ENCODE measurements at regions of chr5 and their contacts with region 1.

Region 1: GRCh38 chr5:671459-672328 is 21.5 kb downstream of the TPPP start:
- DNase-seq: peak; percentile 52 to 94
- H3K4me3 ChIP-seq: peak overlapping the region; percentile 34; the same call in 1 of the 2 replicates
- H3K27ac ChIP-seq: no peak overlapping the region
- H3K4me1 ChIP-seq: peaks cover 27% of the 10 kb centered on the region
- H3K27me3 ChIP-seq: no peaks in the 10 kb centered on the region
- CTCF ChIP-seq: peak; percentile 100

Region 2: DNA sequence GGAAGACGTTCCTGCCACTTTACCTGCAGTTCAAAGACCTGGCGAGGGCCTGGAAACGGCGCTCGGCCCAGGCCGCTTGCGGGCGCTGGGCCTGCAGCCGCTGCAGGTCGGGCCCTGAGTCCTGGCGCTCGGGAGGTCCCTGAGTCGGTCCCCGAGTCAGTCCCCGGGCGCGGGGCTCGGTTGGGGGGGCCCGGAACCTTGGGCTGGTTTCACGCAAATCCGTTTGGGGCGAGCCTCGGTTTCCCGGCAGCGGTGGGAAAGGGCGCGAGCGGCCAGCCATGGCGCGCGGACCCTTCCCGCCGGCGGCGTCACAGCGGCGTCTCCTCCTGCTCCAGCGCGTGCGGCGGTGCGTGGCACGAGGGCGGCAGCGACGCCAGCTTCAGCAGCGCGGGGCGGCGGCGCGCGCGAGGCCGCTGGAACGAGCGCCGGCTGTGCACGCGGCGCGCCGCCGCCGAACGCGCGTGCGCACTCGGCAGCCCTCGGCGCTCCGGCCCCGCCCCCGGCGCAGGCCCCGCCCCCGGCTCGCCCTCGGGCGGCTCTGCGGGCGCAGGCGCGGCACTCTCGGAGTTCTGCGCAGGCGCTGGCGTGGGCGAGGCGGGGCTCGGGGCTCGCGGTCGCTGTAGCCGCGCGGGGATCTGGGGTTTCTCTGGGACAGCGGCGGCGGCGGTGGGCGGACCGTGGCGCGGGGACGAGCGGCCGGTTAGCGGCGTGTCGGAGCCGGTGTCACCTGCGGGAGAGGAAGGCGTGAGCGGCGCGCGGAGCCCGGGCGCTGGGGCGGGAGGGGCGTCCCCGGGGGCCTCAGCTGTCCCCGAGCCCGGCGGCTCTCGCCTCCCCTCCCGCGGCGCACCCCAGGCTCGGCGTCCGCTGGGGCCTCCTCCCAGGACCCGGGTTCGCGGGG is 198.8 kb before region 1 on chr5:
- CTCF ChIA-PET with region 1: no interaction called
- POLR2A ChIA-PET with region 1: interaction called, 8 read pairs
- intact Hi-C with region 1: loop called (anchors 5 kb)
- DNase-seq: peak; percentile 65 to 99
- H3K4me3 ChIP-seq: peak overlapping the region; percentile 67
- H3K27ac ChIP-seq: peak overlapping the region; percentile 59
- H3K4me1 ChIP-seq: peaks cover 19% of the 10 kb centered on the region
- H3K27me3 ChIP-seq: no peaks in the 10 kb centered on the region
- CTCF ChIP-seq: no peak

Region 3: DNA sequence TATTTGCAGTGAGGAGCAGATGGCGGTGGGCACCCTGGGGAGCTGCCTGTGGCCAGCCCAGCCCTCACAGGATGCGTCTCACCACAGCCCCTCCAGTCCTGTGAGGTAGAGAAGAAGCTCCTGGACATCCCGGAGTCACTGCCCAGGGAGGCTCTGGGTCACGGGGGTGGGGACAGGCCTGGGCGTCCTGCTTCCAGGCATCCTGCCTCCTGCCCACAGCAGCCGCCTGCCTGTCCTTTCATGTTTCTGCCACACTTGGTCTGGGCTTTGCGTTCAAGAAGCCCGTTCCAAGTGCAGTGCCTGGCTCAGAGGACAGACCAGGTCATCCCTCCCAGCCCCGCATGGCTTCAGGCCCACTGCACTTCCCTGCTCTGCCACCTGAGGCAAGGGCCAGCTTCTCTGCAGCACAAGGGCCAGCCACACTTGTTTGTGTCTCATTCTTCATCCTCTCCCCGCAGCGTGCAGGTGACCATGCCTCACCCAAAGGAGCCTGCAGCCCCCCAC is 74.6 kb after region 1 on chr5:
- CTCF ChIA-PET with region 1: no interaction called
- POLR2A ChIA-PET with region 1: no interaction called
- intact Hi-C with region 1: no loop called
- DNase-seq: peak in 1 of 2 experiments; percentile 31
- H3K4me3 ChIP-seq: no peak overlapping the region
- H3K27ac ChIP-seq: no peak overlapping the region
- H3K4me1 ChIP-seq: no peaks in the 10 kb centered on the region
- H3K27me3 ChIP-seq: peaks cover 60% of the 10 kb centered on the region
- CTCF ChIP-seq: no peak

Region 4: DNA sequence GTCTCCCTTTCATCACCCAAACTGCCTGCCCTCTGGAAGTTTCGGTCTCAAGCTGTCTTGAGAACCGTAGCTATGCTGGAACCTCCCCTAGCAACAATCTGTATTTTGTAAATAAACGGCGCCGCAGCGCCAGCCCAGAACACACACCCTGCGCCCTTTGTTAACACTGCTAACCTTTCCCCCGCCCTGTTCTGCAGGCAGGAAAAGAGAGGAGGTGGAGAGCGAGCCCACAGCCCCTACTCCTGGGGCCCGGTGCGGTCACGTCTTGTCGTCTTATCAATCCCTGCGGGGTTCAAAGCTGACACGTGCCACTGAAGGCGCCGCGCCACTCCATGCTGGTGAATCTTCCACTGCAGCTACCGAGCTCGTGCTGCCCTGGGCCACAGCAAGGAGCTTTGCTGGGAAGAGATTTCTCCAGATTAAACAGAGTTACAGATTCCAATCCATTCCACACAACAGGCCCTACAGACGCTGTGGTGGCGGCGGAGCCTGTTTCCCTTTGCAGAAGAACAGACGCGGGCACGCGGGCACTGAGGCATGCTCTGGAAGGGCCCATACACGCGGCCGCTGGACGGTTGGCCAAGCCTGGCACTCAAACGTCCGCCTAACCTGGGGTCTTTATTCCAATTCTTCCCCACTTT is 87.5 kb after region 1 on chr5:
- CTCF ChIA-PET with region 1: no interaction called
- POLR2A ChIA-PET with region 1: no interaction called
- intact Hi-C with region 1: loop called (anchors 2 kb)
- DNase-seq: peak; percentile 85 to 91
- H3K4me3 ChIP-seq: no peak overlapping the region
- H3K27ac ChIP-seq: no peak overlapping the region
- H3K4me1 ChIP-seq: 0 out of 2 replicates have a peak, but pooled peaks cover 4% of the 10 kb centered on the region
- H3K27me3 ChIP-seq: peaks cover 80% of the 10 kb centered on the region
- CTCF ChIP-seq: no peak

Region 5: DNA sequence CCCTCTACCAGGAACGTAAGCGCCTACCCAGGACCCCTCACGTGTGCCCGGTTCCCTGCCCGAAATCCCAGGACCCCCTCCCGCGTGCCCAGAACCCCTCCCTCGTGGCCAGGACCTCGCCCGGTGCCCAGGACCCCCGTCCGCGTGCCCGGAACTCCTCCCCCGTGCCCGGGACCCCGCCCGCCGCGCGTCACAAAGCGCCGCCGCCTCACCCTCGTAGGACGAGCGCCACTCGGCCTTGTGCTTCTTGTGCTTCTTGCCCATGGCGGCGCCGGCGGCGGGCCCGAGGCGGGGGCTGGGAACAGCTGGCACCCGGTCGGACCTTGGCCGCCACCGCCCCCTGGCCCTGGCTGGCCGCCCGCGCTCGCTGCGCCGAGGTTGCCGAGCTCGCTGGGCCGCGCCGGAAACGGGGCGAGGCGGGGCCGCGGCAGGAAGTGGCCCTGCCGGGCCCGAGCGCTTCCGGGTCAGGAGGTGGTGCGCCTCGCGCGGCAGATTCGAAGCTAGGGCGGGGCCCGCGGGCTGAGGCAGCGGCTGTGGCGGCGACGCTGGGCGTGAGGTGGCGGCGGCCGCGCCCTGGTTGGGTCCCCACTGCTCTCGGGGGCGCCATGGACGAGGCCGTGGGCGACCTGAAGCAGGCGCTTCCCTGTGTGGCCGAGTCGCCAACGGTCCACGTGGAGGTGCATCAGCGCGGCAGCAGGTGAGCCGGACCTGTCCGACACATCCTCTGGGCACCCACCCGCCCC is 220.9 kb after region 1 on chr5 and contains the starts of genes BRD9 and TRIP13:
- CTCF ChIA-PET with region 1: interaction called, 3 read pairs
- POLR2A ChIA-PET with region 1: interaction called, 5 read pairs
- intact Hi-C with region 1: loop called (anchors 1 kb)
- DNase-seq: peak; percentile 78 to 97
- H3K4me3 ChIP-seq: peak within 1 kb of the TSS; percentile 64
- H3K27ac ChIP-seq: peak within 1 kb of the TSS; percentile 44
- H3K4me1 ChIP-seq: peaks cover 18% of the 10 kb centered on the region
- H3K27me3 ChIP-seq: no peaks in the 10 kb centered on the region
- CTCF ChIP-seq: peak; percentile 27; the same call in 1 of the 2 replicates
- total RNA-seq, gene BRD9: 102 and 112 TPM in 2 replicates
- total RNA-seq, gene TRIP13: 56.1 and 74.0 TPM in 2 replicates

Region 6: DNA sequence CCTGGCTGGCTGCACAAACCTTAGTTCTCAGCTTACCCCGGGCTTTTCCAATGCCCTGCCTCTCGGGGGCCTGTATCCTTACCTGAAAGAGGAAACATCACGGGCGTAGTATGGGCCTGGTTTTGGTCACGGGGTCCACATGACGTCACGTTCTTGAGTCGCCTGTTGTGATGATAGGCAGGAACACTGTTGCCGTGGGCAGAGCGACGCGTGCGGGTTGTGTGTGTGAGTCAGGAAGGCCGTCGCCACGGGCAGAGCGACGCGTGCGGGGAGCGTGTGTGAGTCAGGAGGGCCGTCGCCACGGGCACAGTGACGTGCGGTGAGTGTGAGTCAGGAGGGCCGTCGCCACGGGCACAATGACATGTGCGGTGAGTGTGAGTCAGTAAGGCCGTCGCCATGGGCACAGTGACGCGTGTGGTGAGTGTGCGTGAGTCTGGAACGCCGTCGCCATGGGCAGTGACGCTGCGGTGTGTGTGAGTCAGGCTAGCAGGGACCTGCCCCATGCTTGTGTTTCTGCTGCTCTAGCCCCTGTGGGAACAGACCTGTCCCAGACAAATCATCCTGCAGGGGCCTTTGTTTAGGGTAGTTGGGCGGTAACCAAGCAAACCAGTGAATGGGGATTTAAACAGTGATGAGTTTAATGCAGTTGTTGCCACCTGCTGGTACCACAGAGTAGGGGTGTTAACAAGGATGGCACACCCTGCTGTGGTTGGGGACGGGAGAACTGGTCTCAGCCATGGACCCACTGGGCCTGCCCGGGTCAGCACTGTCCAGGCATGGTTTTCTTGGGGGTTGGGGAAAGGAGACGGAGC is 240.8 kb after region 1 on chr5:
- CTCF ChIA-PET with region 1: no interaction called
- POLR2A ChIA-PET with region 1: no interaction called
- intact Hi-C with region 1: loop called (anchors 1 kb)
- DNase-seq: peak; percentile 95 to 99
- H3K4me3 ChIP-seq: peak overlapping the region; percentile 30; the same call in 1 of the 2 replicates
- H3K27ac ChIP-seq: peak overlapping the region; percentile 79
- H3K4me1 ChIP-seq: peaks cover 14% of the 10 kb centered on the region
- H3K27me3 ChIP-seq: no peaks in the 10 kb centered on the region
- CTCF ChIP-seq: peak; percentile 70

Region 7: GRCh38 chr5:1293416-1294205 is 621.9 kb after region 1 on chr5:
- CTCF ChIA-PET with region 1: interaction called, 10 read pairs
- POLR2A ChIA-PET with region 1: no interaction called
- intact Hi-C with region 1: no loop called
- DNase-seq: no peak
- H3K4me3 ChIP-seq: no peak overlapping the region
- H3K27ac ChIP-seq: no peak overlapping the region
- H3K4me1 ChIP-seq: no peaks in the 10 kb centered on the region
- H3K27me3 ChIP-seq: peaks cover 10% of the 10 kb centered on the region; the same call in 1 of the 2 replicates
- CTCF ChIP-seq: no peak